Endothelial cell of umbilical vein (primary cell): ENCODE measurements at regions of chr20 and their contacts with region 1.

Region 1: DNA sequence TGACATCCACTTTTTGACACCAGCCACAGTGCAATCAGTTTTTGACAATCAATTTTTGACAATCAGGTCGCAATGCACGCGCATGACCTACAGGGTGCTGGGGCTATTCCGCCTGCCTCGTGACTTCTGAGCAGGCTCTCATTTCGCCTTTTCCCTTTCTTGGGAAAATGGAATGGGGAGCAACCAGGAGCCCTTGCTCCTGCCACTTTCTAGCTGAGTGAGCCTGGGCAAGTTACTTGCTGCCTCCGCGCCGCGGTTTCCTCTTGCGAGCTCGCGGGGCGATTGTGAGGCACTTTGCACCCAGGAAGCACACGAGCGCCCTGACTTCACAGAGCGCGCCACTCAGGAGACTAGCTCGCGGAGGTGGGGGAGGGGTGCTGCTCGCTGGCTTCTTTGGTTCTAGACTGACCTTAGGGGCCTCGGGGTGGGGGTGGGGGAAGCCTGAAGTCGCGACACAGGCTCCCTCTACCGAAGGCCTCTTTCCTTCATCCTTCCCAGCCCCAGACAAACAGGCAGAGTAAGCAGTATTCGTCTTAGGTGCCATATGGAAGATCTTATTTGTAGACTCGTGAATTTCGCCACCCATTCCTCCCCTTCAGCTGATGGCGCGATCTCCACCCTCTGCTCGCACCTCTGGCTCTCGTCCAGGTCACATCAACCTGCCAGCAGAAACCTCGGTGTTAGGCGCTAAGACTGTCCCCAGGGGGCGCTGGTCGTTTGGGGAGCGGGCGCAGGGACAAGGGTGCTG is 4.6 kb downstream of the TP53TG5 start:
- DNase-seq: peak; percentile 84
- H3K4me3 ChIP-seq: peak overlapping the region; percentile 17 to 48 (median 30)
- H3K27ac ChIP-seq: no peak overlapping the region
- H3K4me1 ChIP-seq: peaks cover 7% of the 10 kb centered on the region
- H3K27me3 ChIP-seq: no peaks in the 10 kb centered on the region
- CTCF ChIP-seq: peak; percentile 85 to 96
- POLR2A ChIP-seq: no peak

Region 2: GRCh38 chr20:45322952-45323383 is 50.6 kb before region 1 on chr20:
- CTCF ChIA-PET with region 1: interaction called, 61 read pairs
- POLR2A ChIA-PET with region 1: no interaction called
- dilution Hi-C with region 1: no loop called
- intact Hi-C with region 1: loop called (anchors 1 kb)
- DNase-seq: peak; percentile 41
- H3K4me3 ChIP-seq: no peak overlapping the region
- H3K27ac ChIP-seq: no peak overlapping the region
- H3K4me1 ChIP-seq: no peaks in the 10 kb centered on the region
- H3K27me3 ChIP-seq: peaks cover 2% of the 10 kb centered on the region in 2 experiments
- CTCF ChIP-seq: peak in 1 of 2 donors; percentile 15
- POLR2A ChIP-seq: no peak

Region 3: GRCh38 chr20:45347936-45348778 is 25.4 kb before region 1 on chr20 and contains the start of gene SDC4:
- CTCF ChIA-PET with region 1: interaction called, 9 read pairs
- POLR2A ChIA-PET with region 1: interaction called, 6 read pairs
- dilution Hi-C with region 1: no loop called
- intact Hi-C with region 1: loop called (anchors 2 kb)
- DNase-seq: peak; percentile 44
- H3K4me3 ChIP-seq: peak within 1 kb of the TSS; percentile 50 to 85 (median 69)
- H3K27ac ChIP-seq: peak within 1 kb of the TSS; percentile 62
- H3K4me1 ChIP-seq: peaks cover 49% of the 10 kb centered on the region
- H3K27me3 ChIP-seq: no peaks in the 10 kb centered on the region
- CTCF ChIP-seq: no peak
- POLR2A ChIP-seq: peak; percentile 99
- total RNA-seq, gene SDC4: 28.7 and 32.0 TPM in 2 replicates

Region 4: DNA sequence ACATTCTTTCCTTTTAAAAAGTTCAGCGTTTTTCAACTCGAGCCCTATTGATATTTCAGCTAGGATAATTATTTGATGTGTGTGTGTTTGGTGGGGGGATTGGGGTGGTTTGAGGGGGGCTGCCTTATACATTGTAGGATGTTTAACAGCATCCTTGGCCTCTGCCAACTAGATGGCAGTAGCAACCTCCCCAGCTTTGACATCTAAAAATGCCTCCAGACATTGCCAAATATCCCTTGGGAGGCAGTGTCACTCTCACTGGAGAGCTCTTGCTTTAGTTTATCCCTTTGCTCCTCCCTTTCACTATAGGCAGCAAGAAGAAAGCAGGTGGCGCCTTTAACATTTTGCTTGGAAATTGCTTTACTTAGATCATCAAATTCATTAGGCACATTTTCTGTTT is 19.2 kb after region 1 on chr20:
- CTCF ChIA-PET with region 1: interaction called, 10 read pairs
- POLR2A ChIA-PET with region 1: no interaction called
- dilution Hi-C with region 1: no loop called
- intact Hi-C with region 1: no loop called
- DNase-seq: no peak
- H3K4me3 ChIP-seq: no peak overlapping the region
- H3K27ac ChIP-seq: no peak overlapping the region
- H3K4me1 ChIP-seq: peaks cover 3% of the 10 kb centered on the region
- H3K27me3 ChIP-seq: no peaks in the 10 kb centered on the region
- CTCF ChIP-seq: no peak
- POLR2A ChIP-seq: no peak

Region 5: GRCh38 chr20:45415774-45416637 is 42.5 kb after region 1 on chr20 and contains the start of gene PIGT:
- CTCF ChIA-PET with region 1: interaction called, 31 read pairs
- POLR2A ChIA-PET with region 1: no interaction called
- dilution Hi-C with region 1: no loop called
- intact Hi-C with region 1: no loop called
- DNase-seq: peak; percentile 87
- H3K4me3 ChIP-seq: peak within 1 kb of the TSS; percentile 43 to 76 (median 70)
- H3K27ac ChIP-seq: peak within 1 kb of the TSS; percentile 64
- H3K4me1 ChIP-seq: peaks cover 21% of the 10 kb centered on the region
- H3K27me3 ChIP-seq: no peaks in the 10 kb centered on the region
- CTCF ChIP-seq: no peak
- POLR2A ChIP-seq: peak; percentile 93
- total RNA-seq, gene PIGT: 92.7 and 96.8 TPM in 2 replicates